ENCODE measurements at regions of chr11 and their contacts with region 1.

Region 1: GRCh38 chr11:18321980-18322711 is at the starts of genes GTF2H1 and HPS5:
- DNase-seq: peak; percentile 97
- H3K4me3 ChIP-seq: peak within 1 kb of the TSS; percentile 73 to 86
- H3K27ac ChIP-seq: peak within 1 kb of the TSS; percentile 98
- H3K4me1 ChIP-seq: peaks cover 11% of the 10 kb centered on the region
- H3K27me3 ChIP-seq: no peaks in the 10 kb centered on the region
- CTCF ChIP-seq: peak in 2 of 4 experiments; percentile 5 to 9
- POLR2A ChIP-seq: peak; percentile 93
- total RNA-seq, gene GTF2H1: 34.8 to 89.0 TPM
- total RNA-seq, gene HPS5: 20.5 to 56.0 TPM

Region 2: GRCh38 chr11:18395735-18396504 is 73.8 kb after region 1 on chr11:
- intact Hi-C with region 1: loop called (anchors 2 kb)
- DNase-seq: peak; percentile 97
- H3K4me3 ChIP-seq: peak overlapping the region; percentile 49 to 79
- H3K27ac ChIP-seq: peak overlapping the region; percentile 86 to 92
- H3K4me1 ChIP-seq: peaks cover 3% of the 10 kb centered on the region
- H3K27me3 ChIP-seq: no peaks in the 10 kb centered on the region
- CTCF ChIP-seq: peak in 1 of 4 experiments; percentile 17
- POLR2A ChIP-seq: peak; percentile 81

Region 3: GRCh38 chr11:18698341-18699268 is 376.5 kb after region 1 on chr11 and contains the start of gene TMEM86A:
- intact Hi-C with region 1: loop called (anchors 5 kb)
- DNase-seq: peak; percentile 89
- H3K4me3 ChIP-seq: peak within 1 kb of the TSS; percentile 90 to 97
- H3K27ac ChIP-seq: peak within 1 kb of the TSS; percentile 75 to 79
- H3K4me1 ChIP-seq: no peaks in the 10 kb centered on the region
- H3K27me3 ChIP-seq: no peaks in the 10 kb centered on the region
- CTCF ChIP-seq: no peak
- POLR2A ChIP-seq: peak; percentile 68
- total RNA-seq, gene TMEM86A: 3.2 to 6.5 TPM

Measured in prostate gland (tissue), 2 donors.